Ascending aorta (tissue), 2 donors: ENCODE measurements at regions of chr2 and their contacts with region 1.

Region 1: GRCh38 chr2:168455648-168456520 is at the start of gene CERS6:
- DNase-seq: peak; percentile 82 to 97
- H3K4me3 ChIP-seq: peak within 1 kb of the TSS; percentile 92
- H3K27ac ChIP-seq: peak within 1 kb of the TSS; percentile 56 to 73
- H3K4me1 ChIP-seq: peaks cover 0 to 6% of the 10 kb centered on the region in 2 donors
- H3K27me3 ChIP-seq: no peaks in the 10 kb centered on the region
- CTCF ChIP-seq: no peak
- total RNA-seq, gene CERS6: 10.9 TPM

Region 2: GRCh38 chr2:167292430-167293171 is 1163.3 kb before region 1 on chr2:
- intact Hi-C with region 1: loop called (anchors 10 kb)
- DNase-seq: peak; percentile 25 to 89
- H3K4me3 ChIP-seq: peak within 1 kb of the TSS; percentile 66 to 97
- H3K27ac ChIP-seq: peak within 1 kb of the TSS; percentile 77 to 87
- H3K4me1 ChIP-seq: peaks cover 3 to 7% of the 10 kb centered on the region in 2 donors
- H3K27me3 ChIP-seq: no peaks in the 10 kb centered on the region
- CTCF ChIP-seq: peak in 2 of 3 experiments; percentile 12 to 38

Region 3: GRCh38 chr2:168246483-168247340 is 209.2 kb before region 1 on chr2:
- intact Hi-C with region 1: loop called (anchors 10 kb)
- DNase-seq: peak; percentile 11 to 82
- H3K4me3 ChIP-seq: peak overlapping the region; percentile 75 to 98
- H3K27ac ChIP-seq: peak overlapping the region; percentile 82 to 84
- H3K4me1 ChIP-seq: peaks cover 0 to 10% of the 10 kb centered on the region in 2 donors
- H3K27me3 ChIP-seq: no peaks in the 10 kb centered on the region
- CTCF ChIP-seq: peak in 2 of 3 experiments; percentile 47 to 55

Region 4: GRCh38 chr2:168422584-168422983 is 33.3 kb before region 1 on chr2:
- intact Hi-C with region 1: no loop called
- DNase-seq: no peak
- H3K4me3 ChIP-seq: no peak overlapping the region
- H3K27ac ChIP-seq: no peak overlapping the region
- H3K4me1 ChIP-seq: no peaks in the 10 kb centered on the region
- H3K27me3 ChIP-seq: no peaks in the 10 kb centered on the region
- CTCF ChIP-seq: no peak

Region 5: GRCh38 chr2:168518555-168519066 is 62.7 kb after region 1 on chr2:
- intact Hi-C with region 1: loop called (anchors 2 kb)
- DNase-seq: no peak
- H3K4me3 ChIP-seq: peak overlapping the region in 1 of 2 donors; percentile 13
- H3K27ac ChIP-seq: peak overlapping the region; percentile 35 to 47
- H3K4me1 ChIP-seq: peaks cover 0 to 12% of the 10 kb centered on the region in 2 donors
- H3K27me3 ChIP-seq: no peaks in the 10 kb centered on the region
- CTCF ChIP-seq: no peak

Region 6: DNA sequence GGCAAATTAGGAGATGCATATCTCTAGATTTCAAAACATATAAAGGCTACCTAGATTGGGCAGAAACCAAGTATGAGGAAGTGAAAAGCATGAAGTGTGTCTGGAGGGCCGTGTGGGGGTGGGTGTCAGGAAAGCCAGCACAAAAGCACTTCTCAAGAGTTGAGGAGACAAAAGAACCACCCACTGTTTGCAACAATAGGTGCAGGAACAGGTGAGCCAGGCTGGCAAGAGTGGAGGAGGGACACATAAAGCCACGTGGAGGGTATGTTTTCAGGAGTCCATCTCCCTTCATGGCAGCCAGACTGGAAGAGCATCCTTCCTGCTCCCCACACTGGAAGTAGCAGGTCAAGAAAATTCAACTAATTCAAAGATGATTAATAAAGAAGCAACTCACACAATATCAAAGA is 96.6 kb after region 1 on chr2:
- intact Hi-C with region 1: no loop called
- DNase-seq: no peak
- H3K4me3 ChIP-seq: no peak overlapping the region
- H3K27ac ChIP-seq: no peak overlapping the region
- H3K4me1 ChIP-seq: no peaks in the 10 kb centered on the region
- H3K27me3 ChIP-seq: no peaks in the 10 kb centered on the region
- CTCF ChIP-seq: no peak

Region 7: DNA sequence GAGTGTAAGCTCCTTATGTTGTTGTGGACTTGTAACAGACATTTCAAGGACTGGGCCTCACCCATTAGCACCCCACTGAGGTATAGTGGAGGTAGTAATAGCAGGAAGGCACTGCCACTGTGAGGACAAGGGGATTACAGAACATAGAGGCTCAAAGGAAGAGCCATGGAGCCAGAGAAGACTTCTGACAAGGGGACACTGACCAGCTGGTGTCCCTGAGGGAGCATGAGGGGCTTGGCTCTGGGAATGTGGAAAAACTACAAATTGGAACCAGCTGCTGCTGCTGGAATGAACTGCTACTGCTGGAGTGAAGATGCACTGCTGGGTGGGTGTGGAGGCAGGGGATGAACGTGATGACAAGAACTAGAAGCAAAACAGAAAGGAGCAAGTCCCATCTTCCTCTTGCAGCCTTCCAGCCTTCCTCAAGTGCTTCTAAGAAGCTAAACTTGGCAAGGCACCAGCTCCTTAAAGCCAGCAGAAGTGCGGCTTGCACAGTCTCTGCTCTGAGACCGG is 179.2 kb after region 1 on chr2:
- intact Hi-C with region 1: loop called (anchors 5 kb)
- DNase-seq: no peak
- H3K4me3 ChIP-seq: no peak overlapping the region
- H3K27ac ChIP-seq: no peak overlapping the region
- H3K4me1 ChIP-seq: peaks cover 0 to 10% of the 10 kb centered on the region in 2 donors
- H3K27me3 ChIP-seq: no peaks in the 10 kb centered on the region
- CTCF ChIP-seq: no peak